ENCODE measurements at regions of chr2 and their contacts with region 1.

Region 1: GRCh38 chr2:29923110-29923721 is 1.8 kb upstream of the ALK start:
- DNase-seq: peak; percentile 8
- H3K4me3 ChIP-seq: no peak overlapping the region
- H3K27ac ChIP-seq: no peak overlapping the region
- H3K27me3 ChIP-seq: peaks cover 37% of the 10 kb centered on the region
- CTCF ChIP-seq: peak; percentile 91

Region 2: DNA sequence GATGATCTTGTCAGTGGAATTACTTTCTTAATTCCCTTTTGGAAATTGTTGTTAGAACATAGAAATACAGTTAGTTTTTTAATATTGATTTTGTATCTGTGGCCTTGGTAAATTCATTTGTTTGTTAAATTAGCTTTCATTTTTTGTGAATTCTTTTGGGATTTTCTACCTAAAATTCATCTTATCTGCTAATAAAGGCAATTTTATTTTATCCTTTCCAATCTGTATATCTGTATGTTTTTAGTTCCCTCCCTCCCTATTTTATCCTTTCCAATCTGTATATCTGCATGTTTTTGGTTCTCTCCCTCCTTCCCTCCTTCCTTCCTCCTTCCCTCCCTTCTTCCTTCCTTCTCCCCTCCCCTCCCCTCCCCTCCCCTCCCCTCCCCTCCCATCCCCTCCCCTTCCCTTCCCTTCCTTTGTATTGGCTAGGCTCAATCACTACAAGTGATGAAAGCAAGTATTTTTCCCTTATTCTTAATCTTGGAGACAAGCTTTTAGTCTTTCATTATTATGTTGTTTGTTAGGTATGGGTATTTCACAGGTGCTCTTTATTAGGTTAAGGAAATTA is 246.2 kb before region 1 on chr2:
- CTCF ChIA-PET with region 1: no interaction called
- POLR2A ChIA-PET with region 1: no interaction called
- DNase-seq: no peak
- H3K4me3 ChIP-seq: no peak overlapping the region
- H3K27ac ChIP-seq: no peak overlapping the region
- H3K27me3 ChIP-seq: no peaks in the 10 kb centered on the region
- CTCF ChIP-seq: no peak

Region 3: DNA sequence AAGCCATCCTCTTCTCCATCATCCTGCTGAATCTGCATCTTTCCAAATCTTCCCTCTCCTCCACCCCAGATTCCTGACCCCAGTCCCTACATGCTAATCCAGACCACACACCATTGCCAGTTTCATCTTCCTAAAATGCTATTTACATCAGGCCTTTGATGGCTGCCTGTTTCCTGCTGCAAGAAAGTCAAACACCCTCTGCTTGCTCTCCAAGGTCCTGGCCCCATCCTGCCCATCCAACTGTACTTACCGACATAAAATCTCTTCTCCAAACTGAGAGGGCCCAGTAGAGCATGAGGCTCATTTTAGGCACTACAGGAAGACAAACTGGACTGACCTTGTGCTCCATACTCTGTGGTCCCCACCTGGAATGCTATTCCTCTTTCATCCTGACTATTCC is 20.9 kb before region 1 on chr2:
- CTCF ChIA-PET with region 1: interaction called, 10 read pairs
- POLR2A ChIA-PET with region 1: no interaction called
- DNase-seq: no peak
- H3K4me3 ChIP-seq: no peak overlapping the region
- H3K27ac ChIP-seq: no peak overlapping the region
- H3K27me3 ChIP-seq: peaks cover 10% of the 10 kb centered on the region
- CTCF ChIP-seq: no peak

Region 4: GRCh38 chr2:29940706-29941105 is 17.5 kb after region 1 on chr2:
- CTCF ChIA-PET with region 1: interaction called, 15 read pairs
- POLR2A ChIA-PET with region 1: no interaction called
- DNase-seq: no peak
- H3K4me3 ChIP-seq: no peak overlapping the region
- H3K27ac ChIP-seq: no peak overlapping the region
- H3K27me3 ChIP-seq: no peaks in the 10 kb centered on the region
- CTCF ChIP-seq: no peak

Region 5: DNA sequence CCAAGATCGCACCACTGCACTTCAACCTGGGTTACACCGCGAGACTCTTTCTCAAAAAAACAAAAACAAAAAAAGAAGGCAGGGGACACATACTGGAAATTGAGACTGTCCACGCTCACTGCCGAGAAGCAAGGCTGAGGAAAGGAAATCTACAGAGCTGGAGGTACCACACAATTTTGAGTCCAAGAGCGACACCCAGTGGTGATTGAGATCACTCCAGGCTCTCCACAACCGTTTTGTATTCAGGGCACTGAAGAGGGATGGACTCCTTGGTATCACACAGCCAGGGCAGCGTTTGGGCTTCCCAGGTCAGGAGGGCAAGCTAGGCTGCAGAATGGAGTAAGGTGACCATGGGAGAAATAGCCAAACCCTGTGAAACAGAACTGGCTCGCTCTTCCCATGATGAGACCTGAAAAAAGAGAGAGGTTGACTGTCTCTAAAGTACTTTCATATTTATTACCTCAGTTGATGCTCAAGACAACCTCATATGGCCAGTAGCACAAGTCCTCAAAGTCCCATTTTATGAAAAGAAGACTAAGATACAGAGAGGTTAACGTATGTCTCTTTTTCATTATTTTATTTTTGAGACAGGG is 149.1 kb after region 1 on chr2:
- CTCF ChIA-PET with region 1: interaction called, 16 read pairs
- POLR2A ChIA-PET with region 1: no interaction called
- DNase-seq: peak; percentile 34
- H3K4me3 ChIP-seq: no peak overlapping the region
- H3K27ac ChIP-seq: no peak overlapping the region
- H3K27me3 ChIP-seq: peaks cover 8% of the 10 kb centered on the region
- CTCF ChIP-seq: peak; percentile 78

Region 6: DNA sequence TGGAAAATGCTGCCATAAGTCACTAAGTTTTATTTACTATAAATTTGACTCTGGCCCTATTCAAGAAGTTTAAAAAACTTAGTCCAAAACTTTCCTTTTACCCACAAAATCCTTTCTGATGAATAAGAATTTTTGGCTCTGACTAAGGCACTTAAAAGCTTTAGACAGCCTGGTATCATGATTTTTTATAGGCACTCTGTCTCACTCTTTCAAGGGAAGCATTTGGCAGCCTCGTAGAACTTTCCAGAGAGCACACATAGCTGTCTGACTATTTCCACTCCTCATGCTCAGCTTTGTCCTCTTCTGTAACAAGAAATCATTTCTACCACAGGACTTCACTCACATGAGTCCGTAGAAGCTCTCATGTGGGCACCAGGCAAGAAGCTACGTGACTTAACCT is 1523.6 kb after region 1 on chr2:
- CTCF ChIA-PET with region 1: no interaction called
- POLR2A ChIA-PET with region 1: no interaction called
- DNase-seq: no peak
- H3K4me3 ChIP-seq: no peak overlapping the region
- H3K27ac ChIP-seq: no peak overlapping the region
- H3K27me3 ChIP-seq: no peaks in the 10 kb centered on the region
- CTCF ChIP-seq: no peak